MCF 10A (cell line): ENCODE measurements at regions of chr15 and their contacts with region 1.

Region 1: GRCh38 chr15:78750566-78750965 is 60.7 kb downstream of the ADAMTS7 start:
- DNase-seq: no peak
- H3K4me3 Mint-ChIP-seq: peak overlapping the region; percentile 51
- H3K27ac Mint-ChIP-seq: no peak overlapping the region
- H3K4me1 Mint-ChIP-seq: peaks cover 5% of the 10 kb centered on the region
- H3K27me3 Mint-ChIP-seq: no peaks in the 10 kb centered on the region
- CTCF ChIP-seq: no peak

Region 2: GRCh38 chr15:78618490-78618934 is 132.1 kb before region 1 on chr15:
- CTCF ChIA-PET with region 1: interaction called, 6 read pairs
- POLR2A ChIA-PET with region 1: no interaction called
- intact Hi-C with region 1: loop called (anchors 1 kb)
- DNase-seq: peak; percentile 84
- H3K4me3 Mint-ChIP-seq: no peak overlapping the region
- H3K27ac Mint-ChIP-seq: no peak overlapping the region
- H3K4me1 Mint-ChIP-seq: no peaks in the 10 kb centered on the region
- H3K27me3 Mint-ChIP-seq: peaks cover 31% of the 10 kb centered on the region
- CTCF ChIP-seq: peak; percentile 76

Region 3: GRCh38 chr15:78638658-78639314 is 111.8 kb before region 1 on chr15:
- CTCF ChIA-PET with region 1: interaction called, 30 read pairs
- POLR2A ChIA-PET with region 1: no interaction called
- intact Hi-C with region 1: loop called (anchors 5 kb)
- DNase-seq: peak; percentile 72
- H3K4me3 Mint-ChIP-seq: no peak overlapping the region
- H3K27ac Mint-ChIP-seq: no peak overlapping the region
- H3K4me1 Mint-ChIP-seq: no peaks in the 10 kb centered on the region
- H3K27me3 Mint-ChIP-seq: no peaks in the 10 kb centered on the region
- CTCF ChIP-seq: peak; percentile 63

Region 4: DNA sequence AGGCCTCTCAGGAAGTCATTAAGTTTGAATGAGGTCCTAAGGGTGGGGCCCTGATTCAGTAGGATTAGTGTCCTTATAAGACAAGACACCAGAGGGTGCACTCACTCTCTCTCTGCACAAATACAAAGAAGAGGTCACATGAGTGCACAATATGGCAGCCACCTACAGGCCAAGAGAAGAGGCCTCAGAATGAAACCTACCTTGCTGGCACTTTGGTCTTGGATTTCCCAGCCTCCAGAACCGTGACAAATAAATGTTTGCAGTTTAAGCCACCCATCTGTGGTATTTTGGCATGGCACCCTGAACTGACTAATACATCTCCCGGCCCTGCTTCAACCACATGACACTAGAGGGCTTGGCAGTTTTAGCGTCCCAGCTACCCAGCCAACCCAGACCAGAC is 35.7 kb before region 1 on chr15:
- CTCF ChIA-PET with region 1: interaction called, 6 read pairs
- POLR2A ChIA-PET with region 1: interaction called, 3 read pairs
- intact Hi-C with region 1: loop called (anchors 5 kb)
- DNase-seq: peak; percentile 41
- H3K4me3 Mint-ChIP-seq: no peak overlapping the region
- H3K27ac Mint-ChIP-seq: peak overlapping the region; percentile 78
- H3K4me1 Mint-ChIP-seq: peaks cover 28% of the 10 kb centered on the region
- H3K27me3 Mint-ChIP-seq: no peaks in the 10 kb centered on the region
- CTCF ChIP-seq: peak; percentile 7

Region 5: GRCh38 chr15:78739996-78740903 is 10.3 kb before region 1 on chr15:
- CTCF ChIA-PET with region 1: interaction called, 27 read pairs
- POLR2A ChIA-PET with region 1: no interaction called
- intact Hi-C with region 1: no loop called
- DNase-seq: peak; percentile 67
- H3K4me3 Mint-ChIP-seq: no peak overlapping the region
- H3K27ac Mint-ChIP-seq: no peak overlapping the region
- H3K4me1 Mint-ChIP-seq: no peaks in the 10 kb centered on the region
- H3K27me3 Mint-ChIP-seq: peaks cover under 1% of the 10 kb centered on the region
- CTCF ChIP-seq: peak; percentile 45